ENCODE measurements at regions of chr2 and their contacts with region 1.

Region 1: GRCh38 chr2:64052468-64053241 is 33.4 kb upstream of the VPS54 start:
- DNase-seq: no peak
- H3K4me3 ChIP-seq: no peak overlapping the region
- H3K27ac ChIP-seq: no peak overlapping the region
- H3K4me1 ChIP-seq: peaks cover 4% of the 10 kb centered on the region; the same call in 1 of the 2 replicates
- H3K27me3 ChIP-seq: no peaks in the 10 kb centered on the region
- CTCF ChIP-seq: no peak

Region 2: DNA sequence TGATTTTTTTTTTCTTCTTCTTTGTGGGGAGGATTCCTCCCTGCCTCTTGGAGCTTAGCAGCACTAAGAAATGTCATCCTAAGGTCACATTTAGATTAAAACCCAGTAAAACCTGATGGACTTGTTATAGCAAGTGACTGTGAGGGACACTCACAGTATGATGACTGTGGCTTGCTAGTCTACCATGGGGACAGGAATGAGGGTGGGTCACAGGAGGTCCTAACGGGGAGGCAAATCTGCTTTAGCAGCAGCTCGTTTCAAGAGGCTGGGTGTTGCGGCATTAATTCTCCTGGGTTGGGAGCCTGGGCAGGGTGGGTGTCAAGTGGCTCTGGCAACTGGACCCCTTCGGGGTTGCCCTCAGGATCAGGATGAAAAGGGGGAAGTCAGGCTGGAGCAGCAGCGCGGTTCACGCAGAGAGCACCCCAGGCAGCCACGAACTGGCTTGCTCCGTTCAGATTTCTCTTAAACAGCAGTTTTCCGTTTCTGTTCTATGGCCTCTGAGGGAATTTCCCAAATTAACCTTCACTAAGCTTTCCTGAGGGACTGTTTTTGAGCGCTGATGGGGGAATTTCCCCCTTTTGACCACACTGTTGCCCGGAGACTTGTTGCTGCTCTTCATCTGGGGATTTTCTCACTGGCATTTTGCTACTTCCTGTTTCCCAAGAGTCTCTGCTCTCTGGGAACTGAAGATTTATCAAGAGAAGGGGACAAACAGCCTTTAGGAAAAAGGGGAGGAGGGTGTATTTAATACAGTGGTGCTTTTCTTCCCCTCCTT is 151.4 kb after region 1 on chr2:
- CTCF ChIA-PET with region 1: no interaction called
- POLR2A ChIA-PET with region 1: no interaction called
- intact Hi-C with region 1: loop called (anchors 1 kb)
- DNase-seq: peak; percentile 71 to 97
- H3K4me3 ChIP-seq: peak overlapping the region; percentile 40; the same call in 1 of the 2 replicates
- H3K27ac ChIP-seq: peak overlapping the region; percentile 93
- H3K4me1 ChIP-seq: peaks cover 45% of the 10 kb centered on the region
- H3K27me3 ChIP-seq: no peaks in the 10 kb centered on the region
- CTCF ChIP-seq: no peak

Region 3: GRCh38 chr2:64488050-64488974 is 435.7 kb after region 1 on chr2:
- CTCF ChIA-PET with region 1: interaction called, 3 read pairs
- POLR2A ChIA-PET with region 1: no interaction called
- intact Hi-C with region 1: loop called (anchors 1 kb)
- DNase-seq: peak in 1 of 2 experiments; percentile 74
- H3K4me3 ChIP-seq: no peak overlapping the region
- H3K27ac ChIP-seq: no peak overlapping the region
- H3K4me1 ChIP-seq: peaks cover 4% of the 10 kb centered on the region; the same call in 1 of the 2 replicates
- H3K27me3 ChIP-seq: no peaks in the 10 kb centered on the region
- CTCF ChIP-seq: peak; percentile 98

Region 4: GRCh38 chr2:64562148-64562784 is 509.6 kb after region 1 on chr2:
- CTCF ChIA-PET with region 1: no interaction called
- POLR2A ChIA-PET with region 1: no interaction called
- intact Hi-C with region 1: loop called (anchors 1 kb)
- DNase-seq: no peak
- H3K4me3 ChIP-seq: no peak overlapping the region
- H3K27ac ChIP-seq: no peak overlapping the region
- H3K4me1 ChIP-seq: no peaks in the 10 kb centered on the region
- H3K27me3 ChIP-seq: no peaks in the 10 kb centered on the region
- CTCF ChIP-seq: peak; percentile 69

Measured in PC-9 (cell line).